ENCODE measurements at regions of chr3 and their contacts with region 1.

Region 1: DNA sequence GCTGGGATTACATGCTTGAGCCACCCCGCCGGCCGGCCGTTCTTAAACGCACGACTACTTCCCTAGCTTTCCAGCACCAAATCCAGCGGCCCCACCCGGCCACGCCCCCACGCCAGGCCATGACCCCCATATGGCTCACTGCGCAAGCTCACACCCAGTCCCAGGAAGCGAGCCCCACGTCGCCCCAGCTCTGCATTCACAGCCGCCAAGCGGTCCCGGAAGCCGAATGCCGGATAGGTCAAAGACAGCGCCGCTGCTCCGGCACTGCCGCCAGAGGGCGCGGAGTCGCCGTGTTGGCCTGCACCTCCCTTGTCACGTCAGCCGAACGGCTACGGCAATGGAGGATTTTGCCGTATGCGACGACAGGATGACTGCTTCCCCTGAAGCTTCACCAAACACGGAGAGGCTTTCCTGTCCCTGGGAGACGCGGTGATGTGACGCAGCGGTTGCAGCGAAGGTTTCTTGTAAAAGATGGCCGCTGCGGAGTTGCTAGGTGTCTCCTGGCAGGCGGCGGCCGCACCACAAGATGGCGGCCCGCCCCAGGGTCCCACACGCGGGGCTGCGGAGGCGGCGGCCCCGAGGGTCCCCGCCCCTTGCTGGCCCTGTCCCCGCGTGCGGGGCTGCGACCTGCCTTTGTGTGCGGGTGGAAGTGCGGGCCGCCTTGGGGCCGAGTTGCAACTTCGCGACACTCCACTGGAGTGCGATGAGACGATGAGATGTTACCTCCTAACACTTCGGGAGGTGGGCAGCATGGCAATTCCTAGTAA is 30.2 kb upstream of the RPN1 start:
- DNase-seq: peak; percentile 100
- H3K4me3 Mint-ChIP-seq: peak overlapping the region; percentile 81
- H3K27ac Mint-ChIP-seq: peak overlapping the region; percentile 96
- H3K4me1 Mint-ChIP-seq: peaks cover 10% of the 10 kb centered on the region
- H3K27me3 Mint-ChIP-seq: no peaks in the 10 kb centered on the region
- CTCF ChIP-seq: peak; percentile 99

Region 2: DNA sequence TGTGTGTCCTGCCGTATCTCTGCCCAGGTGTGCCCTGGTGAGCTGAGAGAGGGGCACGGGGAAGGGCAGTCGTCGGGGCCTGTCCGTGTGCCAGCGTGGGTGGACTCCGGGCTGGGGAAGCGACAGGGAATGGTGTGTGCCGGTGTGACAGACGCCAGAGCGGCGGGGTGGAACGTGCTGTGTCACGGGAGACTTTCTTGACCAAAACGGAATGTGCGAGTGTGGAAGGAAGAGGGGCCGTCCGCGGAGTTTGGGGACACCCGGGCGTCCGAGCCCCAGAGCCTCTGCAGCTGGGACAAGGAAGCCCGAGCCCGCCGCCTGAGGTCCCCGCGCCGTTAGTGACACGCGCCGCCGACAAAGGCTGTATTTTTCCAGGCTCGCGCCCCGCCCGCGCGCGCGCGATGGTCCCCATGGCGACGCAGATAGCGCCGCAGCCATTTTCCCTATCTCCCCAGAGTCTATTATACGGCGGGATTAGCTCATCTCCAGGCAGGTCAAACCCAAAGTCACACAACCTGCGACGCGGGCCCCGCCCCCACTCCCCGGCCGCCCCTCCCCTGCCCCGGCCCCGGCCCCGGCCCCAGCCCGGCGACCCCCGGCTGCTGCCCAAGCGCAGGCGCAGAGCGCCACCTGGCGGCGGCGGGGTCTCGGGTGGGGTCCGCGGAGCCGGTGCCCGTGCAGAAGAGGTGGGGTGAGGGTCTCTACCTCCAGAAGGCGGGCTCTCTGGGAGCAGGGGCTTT is 183.2 kb before region 1 on chr3:
- CTCF ChIA-PET with region 1: no interaction called
- intact Hi-C with region 1: no loop called
- DNase-seq: peak; percentile 90
- H3K4me3 Mint-ChIP-seq: peak overlapping the region; percentile 70
- H3K27ac Mint-ChIP-seq: no peak overlapping the region
- H3K4me1 Mint-ChIP-seq: peaks cover 13% of the 10 kb centered on the region
- H3K27me3 Mint-ChIP-seq: no peaks in the 10 kb centered on the region
- CTCF ChIP-seq: peak; percentile 98

Region 3: DNA sequence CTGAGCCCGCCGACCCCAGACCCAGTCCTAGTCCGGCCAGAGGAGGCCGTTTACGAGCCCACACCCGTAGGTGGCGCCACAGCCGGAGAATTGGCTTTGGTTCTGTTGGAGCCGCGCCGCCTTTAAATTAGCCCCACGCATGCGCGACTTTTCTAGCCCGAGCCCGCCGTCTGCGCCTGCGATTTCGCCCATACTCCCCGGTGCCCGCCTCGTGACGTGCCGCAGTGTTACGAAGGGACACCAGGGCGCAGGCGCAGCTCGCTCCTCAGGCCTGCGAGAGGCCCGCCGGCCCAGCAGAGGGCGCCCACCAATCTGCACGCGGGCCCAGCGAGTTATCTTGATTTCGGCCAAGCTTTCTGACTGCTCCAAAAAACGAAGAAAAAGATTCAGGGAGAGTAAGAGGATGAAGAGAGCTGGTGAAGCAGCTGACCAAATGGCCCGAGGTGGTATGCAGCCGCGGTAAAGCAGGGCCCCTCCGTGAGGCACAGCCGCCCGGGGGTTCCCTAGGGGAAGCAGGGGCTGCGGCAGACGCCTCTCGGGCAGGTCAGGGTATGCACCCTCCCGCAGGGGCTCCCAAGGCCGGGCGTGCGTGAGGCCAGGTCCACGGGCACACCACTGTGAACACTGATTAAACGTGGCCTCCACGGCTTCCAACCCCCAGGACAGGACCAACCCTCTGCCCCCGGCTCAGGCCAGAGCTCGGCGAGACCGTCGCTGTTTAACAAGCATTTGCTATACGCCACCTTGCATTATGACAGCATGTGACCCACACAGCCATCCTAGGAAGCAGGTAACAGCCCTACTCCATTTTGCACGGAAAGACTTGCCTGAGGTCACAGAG is 63.0 kb before region 1 on chr3:
- CTCF ChIA-PET with region 1: interaction called, 14 read pairs
- intact Hi-C with region 1: no loop called
- DNase-seq: peak; percentile 99
- H3K4me3 Mint-ChIP-seq: peak overlapping the region; percentile 86
- H3K27ac Mint-ChIP-seq: peak overlapping the region; percentile 62
- H3K4me1 Mint-ChIP-seq: peaks cover 28% of the 10 kb centered on the region
- H3K27me3 Mint-ChIP-seq: no peaks in the 10 kb centered on the region
- CTCF ChIP-seq: peak; percentile 88

Region 4: GRCh38 chr3:128725932-128726690 is 45.3 kb after region 1 on chr3 and contains the start of gene RAB7A:
- CTCF ChIA-PET with region 1: interaction called, 22 read pairs
- intact Hi-C with region 1: loop called (anchors 5 kb)
- DNase-seq: peak; percentile 100
- H3K4me3 Mint-ChIP-seq: peak within 1 kb of the TSS; percentile 94
- H3K27ac Mint-ChIP-seq: peak within 1 kb of the TSS; percentile 97
- H3K4me1 Mint-ChIP-seq: peaks cover 31% of the 10 kb centered on the region
- H3K27me3 Mint-ChIP-seq: peaks cover 7% of the 10 kb centered on the region
- CTCF ChIP-seq: no peak
- total RNA-seq, gene RAB7A: 491 and 522 TPM in 2 replicates

Region 5: DNA sequence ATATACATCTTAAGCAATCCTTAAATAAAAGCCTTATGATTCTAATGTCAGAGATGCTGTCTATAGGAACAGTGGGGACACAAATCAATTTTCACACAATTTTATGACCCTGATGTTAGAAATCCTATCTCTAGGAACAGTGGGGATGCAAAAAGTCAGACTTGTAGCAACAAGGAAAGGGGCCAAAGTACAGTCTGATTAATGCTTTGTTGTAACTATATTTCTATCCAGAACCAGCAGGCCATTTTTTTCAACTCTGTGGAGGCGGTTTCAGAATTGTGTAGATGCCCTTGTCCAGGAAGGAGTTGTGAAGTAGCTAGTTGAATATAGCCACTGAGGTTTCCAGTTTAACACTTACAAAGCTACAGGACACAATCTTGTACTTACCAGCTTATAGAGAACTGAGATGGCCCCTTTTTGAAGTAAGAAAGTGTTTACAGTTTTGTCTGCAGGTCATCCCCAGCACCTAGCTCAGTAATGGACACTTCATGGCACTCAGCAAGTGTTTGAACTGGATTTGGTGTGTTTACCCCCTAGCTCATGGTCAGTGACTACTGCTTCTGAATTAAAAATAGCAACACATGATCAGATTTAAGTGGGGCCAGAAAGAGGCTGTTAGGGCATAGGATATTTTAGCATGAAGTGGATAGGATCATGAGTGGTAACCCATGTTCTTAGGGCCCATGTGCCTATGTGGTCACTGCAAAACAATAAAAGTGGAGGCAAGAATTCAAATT is 99.5 kb after region 1 on chr3:
- CTCF ChIA-PET with region 1: interaction called, 13 read pairs
- intact Hi-C with region 1: no loop called
- DNase-seq: no peak
- H3K4me3 Mint-ChIP-seq: no peak overlapping the region
- H3K27ac Mint-ChIP-seq: peak overlapping the region; percentile 11
- H3K4me1 Mint-ChIP-seq: peaks cover 75% of the 10 kb centered on the region
- H3K27me3 Mint-ChIP-seq: no peaks in the 10 kb centered on the region
- CTCF ChIP-seq: no peak

Region 6: DNA sequence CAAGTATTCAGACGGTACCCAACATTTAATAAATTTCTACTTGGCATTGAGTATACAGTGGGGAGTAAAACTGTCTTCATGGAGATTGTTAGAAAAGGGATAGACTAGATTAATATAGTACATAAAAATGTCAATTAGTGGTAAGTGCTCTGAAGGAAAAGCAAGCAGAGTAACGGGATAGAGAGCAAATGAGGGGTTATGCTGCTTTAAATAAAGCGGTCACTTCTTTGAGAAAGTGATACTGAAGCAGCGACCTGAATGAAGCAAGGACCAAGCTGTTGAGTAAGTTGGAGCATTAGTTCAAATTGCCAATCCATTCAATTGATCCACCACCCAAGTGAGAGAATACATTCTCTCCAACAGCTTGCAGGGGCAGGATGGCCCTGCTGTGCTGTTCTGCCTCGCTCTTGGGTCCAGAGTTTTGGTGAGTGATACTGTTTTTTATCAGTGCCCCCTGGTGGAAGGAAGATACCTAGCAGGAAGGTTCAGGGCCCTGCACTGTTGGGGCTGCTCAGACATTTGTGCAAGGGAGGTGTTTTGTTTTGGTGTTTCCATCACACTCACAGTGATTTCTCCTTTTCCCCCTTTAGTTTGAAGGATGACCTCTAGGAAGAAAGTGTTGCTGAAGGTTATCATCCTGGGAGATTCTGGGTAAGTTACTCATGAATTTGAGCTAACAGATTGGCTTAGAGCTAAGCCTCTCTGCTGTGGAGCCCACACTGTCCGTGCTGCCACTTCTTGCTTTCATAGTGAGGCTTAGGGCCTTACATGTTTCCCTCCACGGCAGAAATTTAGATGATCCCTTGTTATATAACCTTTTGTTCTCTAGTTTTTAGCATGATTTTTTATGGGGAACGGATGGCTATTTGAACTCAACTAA is 114.2 kb after region 1 on chr3:
- CTCF ChIA-PET with region 1: interaction called, 59 read pairs
- intact Hi-C with region 1: loop called (anchors 1 kb)
- DNase-seq: peak; percentile 79
- H3K4me3 Mint-ChIP-seq: no peak overlapping the region
- H3K27ac Mint-ChIP-seq: peak overlapping the region; percentile 1
- H3K4me1 Mint-ChIP-seq: peaks cover 18% of the 10 kb centered on the region
- H3K27me3 Mint-ChIP-seq: no peaks in the 10 kb centered on the region
- CTCF ChIP-seq: peak; percentile 92

Region 7: DNA sequence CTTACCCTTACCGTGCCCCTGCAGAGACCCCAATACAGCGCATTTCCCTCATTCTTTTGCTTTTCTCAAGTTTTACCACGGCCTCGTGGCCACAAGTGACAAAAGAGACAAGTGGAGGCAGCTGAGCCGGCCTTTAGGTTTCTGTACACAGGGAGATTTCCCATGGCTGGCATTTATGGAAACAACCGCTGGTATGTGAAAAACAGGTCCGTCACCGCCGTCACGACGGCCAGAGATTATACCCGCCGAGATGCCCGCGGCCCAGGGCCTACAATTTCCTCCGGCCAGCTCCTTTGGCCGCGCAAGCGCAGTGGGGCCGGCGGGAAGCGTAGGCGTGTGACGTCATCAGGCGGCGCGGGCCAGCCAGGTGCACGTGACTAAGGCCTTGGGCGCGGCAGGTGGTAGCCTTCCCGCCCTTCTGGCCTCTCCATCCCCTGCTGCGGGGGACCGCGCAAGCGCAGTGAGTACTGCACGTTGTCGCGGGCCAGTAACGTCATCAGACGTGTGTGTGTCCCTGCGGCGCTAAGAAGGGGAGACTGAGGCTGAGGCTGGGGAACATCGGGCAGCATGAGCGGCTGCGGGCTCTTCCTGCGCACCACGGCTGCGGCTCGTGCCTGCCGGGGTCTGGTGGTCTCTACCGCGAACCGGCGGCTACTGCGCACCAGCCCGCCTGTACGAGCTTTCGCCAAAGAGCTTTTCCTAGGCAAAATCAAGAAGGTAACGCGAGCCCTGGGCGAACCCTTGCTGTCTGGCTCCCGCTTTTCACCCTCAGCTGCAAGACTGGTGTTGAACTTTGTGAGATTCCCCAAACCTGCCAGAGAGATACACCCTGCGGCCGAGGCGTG is 198.6 kb after region 1 on chr3 and contains the start of gene ACAD9:
- CTCF ChIA-PET with region 1: interaction called, 15 read pairs
- intact Hi-C with region 1: no loop called
- DNase-seq: peak; percentile 100
- H3K4me3 Mint-ChIP-seq: peak within 1 kb of the TSS; percentile 81
- H3K27ac Mint-ChIP-seq: peak within 1 kb of the TSS; percentile 84
- H3K4me1 Mint-ChIP-seq: peaks cover 43% of the 10 kb centered on the region
- H3K27me3 Mint-ChIP-seq: peaks cover 12% of the 10 kb centered on the region
- CTCF ChIP-seq: no peak
- total RNA-seq, gene ACAD9: 112 and 124 TPM in 2 replicates

Region 8: DNA sequence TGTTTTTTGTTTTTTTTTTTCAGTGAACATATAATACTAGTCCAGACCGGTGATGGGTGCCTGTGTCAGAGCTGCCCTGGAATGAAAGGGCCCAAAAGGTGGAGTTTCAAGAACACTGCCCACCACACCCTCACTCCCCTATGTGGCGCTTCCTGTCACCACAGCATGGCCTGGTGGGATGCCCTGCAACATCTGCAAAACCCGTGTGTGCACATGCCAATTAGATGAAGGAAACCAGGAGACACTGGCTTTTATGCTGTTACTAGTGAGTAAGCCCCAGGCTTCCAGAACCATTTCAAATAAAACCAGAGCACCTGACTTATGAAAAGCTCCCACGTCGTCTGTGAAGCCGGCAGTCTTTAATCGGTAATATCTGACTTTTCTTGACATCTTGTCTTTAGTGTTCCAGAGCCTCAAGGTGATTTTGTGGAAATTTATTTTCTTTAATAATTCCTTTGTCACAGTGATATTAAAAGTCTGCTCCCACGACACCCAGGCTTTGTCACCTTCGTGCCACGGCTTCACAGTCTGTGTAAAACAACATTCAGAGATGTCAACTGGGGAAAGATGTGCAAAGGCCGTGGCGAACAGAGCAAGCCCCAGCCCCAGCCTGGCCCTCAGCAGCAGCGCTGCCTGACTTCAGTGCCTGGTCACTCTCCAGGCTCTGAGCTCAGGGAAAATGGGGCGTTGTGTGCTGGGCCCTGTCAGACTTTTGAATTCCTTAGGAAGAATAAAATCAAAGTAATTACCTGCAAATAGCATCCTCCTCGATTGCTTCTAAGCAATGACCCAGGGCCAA is 306.7 kb after region 1 on chr3:
- CTCF ChIA-PET with region 1: no interaction called
- intact Hi-C with region 1: no loop called
- DNase-seq: no peak
- H3K4me3 Mint-ChIP-seq: no peak overlapping the region
- H3K27ac Mint-ChIP-seq: no peak overlapping the region
- H3K4me1 Mint-ChIP-seq: no peaks in the 10 kb centered on the region
- H3K27me3 Mint-ChIP-seq: peaks cover 42% of the 10 kb centered on the region
- CTCF ChIP-seq: no peak

Measured in Calu3 (cell line).